Activated CD8-positive, alpha-beta T cell treated with anti-CD3 and anti-CD28 coated beads, Interleukin-2, amount 10 ng/mL, durations not matched to agents 7 days and 5 days (primary cell): ENCODE measurements at regions of chr2 and their contacts with region 1.

Region 1: GRCh38 chr2:218679119-218679518 is 7.2 kb downstream of the STK36 start:
- DNase-seq: no peak
- ATAC-seq: no peak
- H3K4me3 Mint-ChIP-seq: no peak overlapping the region
- H3K27ac Mint-ChIP-seq: no peak overlapping the region
- H3K4me1 Mint-ChIP-seq: no peaks in the 10 kb centered on the region
- H3K27me3 Mint-ChIP-seq: no peaks in the 10 kb centered on the region

Region 2: GRCh38 chr2:218691234-218691633 is 12.1 kb after region 1 on chr2:
- CTCF ChIA-PET with region 1: interaction called, 22 read pairs
- POLR2A ChIA-PET with region 1: no interaction called
- DNase-seq: no peak
- ATAC-seq: no peak
- H3K4me3 Mint-ChIP-seq: no peak overlapping the region
- H3K27ac Mint-ChIP-seq: no peak overlapping the region
- H3K4me1 Mint-ChIP-seq: peaks cover 2% of the 10 kb centered on the region
- H3K27me3 Mint-ChIP-seq: no peaks in the 10 kb centered on the region

Region 3: GRCh38 chr2:218717262-218717661 is 38.1 kb after region 1 on chr2:
- CTCF ChIA-PET with region 1: no interaction called
- POLR2A ChIA-PET with region 1: no interaction called
- DNase-seq: no peak
- ATAC-seq: no peak
- H3K4me3 Mint-ChIP-seq: no peak overlapping the region
- H3K27ac Mint-ChIP-seq: no peak overlapping the region
- H3K4me1 Mint-ChIP-seq: peaks cover 15% of the 10 kb centered on the region
- H3K27me3 Mint-ChIP-seq: no peaks in the 10 kb centered on the region